Colonic mucosa (tissue), 4 donors: ENCODE measurements at regions of chr10 and their contacts with region 1.

Region 1: GRCh38 chr10:43689955-43690771 is 41.5 kb upstream of the ZNF32 start:
- DNase-seq: peak; percentile 87
- H3K4me3 ChIP-seq: peak overlapping the region; percentile 35
- H3K27ac ChIP-seq: peak overlapping the region; percentile 5
- H3K4me1 ChIP-seq: no peaks in the 10 kb centered on the region
- H3K27me3 ChIP-seq: no peaks in the 10 kb centered on the region
- CTCF ChIP-seq: peak; percentile 86

Region 2: DNA sequence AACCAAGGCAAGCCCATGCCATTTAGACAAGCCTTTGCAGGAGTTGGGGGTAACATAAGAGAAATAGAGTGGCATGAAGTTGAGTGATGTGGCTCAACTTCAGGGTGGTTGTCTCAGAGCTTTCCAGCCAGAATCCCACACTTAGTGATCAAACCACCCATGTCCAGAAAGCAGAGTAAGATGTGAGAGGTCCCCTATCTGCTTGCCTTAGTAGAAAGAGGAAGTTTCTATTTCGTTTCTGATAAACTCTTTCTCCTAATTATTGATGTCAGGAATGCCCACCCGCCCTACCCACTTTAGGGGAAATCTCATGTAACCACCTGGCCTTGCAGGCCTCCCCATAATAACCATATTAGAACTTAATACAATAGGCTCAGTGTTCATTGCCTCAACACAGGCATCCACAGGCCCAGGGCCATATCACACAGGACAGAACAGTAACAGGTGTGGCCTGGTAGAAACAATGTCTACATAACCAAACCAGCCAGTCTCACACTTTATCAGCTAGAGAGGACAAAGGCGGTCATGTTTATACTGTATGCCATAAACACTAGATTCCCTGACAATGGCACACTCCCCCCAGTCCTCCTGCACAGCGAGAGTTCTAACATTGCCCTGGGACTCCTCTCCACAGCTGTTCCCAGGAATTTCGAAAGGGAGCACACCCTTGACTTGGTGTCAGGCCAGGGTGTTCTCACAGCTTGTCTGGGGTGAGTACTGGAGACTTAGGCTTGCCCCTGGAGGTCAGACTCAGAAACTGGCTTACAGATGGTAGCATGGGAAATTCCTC is 330.4 kb after region 1 on chr10:
- intact Hi-C with region 1: loop called (anchors 10 kb)
- DNase-seq: peak; percentile 29
- H3K4me3 ChIP-seq: no peak overlapping the region
- H3K27ac ChIP-seq: no peak overlapping the region
- H3K4me1 ChIP-seq: no peaks in the 10 kb centered on the region
- H3K27me3 ChIP-seq: no peaks in the 10 kb centered on the region
- CTCF ChIP-seq: no peak

Region 3: DNA sequence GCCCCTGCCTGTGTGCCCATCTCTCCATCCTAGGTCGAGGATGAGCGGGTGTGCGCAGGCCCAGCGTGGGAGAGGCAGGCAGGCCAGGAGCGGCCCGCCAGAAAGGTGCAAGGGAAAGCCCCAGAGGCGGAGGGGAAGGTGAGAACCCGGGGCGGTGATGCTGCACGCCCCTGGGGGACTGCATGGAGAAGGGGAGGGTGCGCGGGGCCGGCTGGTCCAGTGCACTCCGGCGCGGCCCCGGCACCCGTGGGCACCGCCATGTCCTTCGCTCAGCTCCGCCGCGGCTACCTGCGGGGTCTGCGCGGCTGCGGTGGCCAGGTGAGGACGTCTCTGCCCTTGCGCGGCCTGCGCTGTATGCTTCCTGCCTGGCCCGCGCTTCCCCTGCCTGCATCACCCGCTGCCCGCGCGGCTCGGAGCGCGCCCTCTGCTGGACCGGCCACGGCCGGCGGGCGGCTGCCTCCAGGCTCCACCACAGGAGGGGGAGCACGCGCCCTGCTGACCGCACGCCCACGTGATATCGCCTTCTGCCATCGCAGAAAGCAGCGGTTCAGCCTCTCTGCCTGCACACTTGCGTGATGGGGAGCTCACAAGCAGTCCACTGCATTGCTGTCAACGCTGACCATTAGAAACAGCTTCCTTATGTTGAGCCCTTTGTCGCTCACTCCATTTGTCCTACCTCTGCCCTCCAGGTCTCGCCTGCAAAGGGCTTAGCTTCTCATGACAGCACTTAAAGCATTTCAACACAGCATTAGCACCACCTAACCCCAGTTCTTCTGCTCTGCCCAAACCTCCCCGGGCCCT is 620.8 kb after region 1 on chr10:
- intact Hi-C with region 1: loop called (anchors 5 kb)
- DNase-seq: peak; percentile 79
- H3K4me3 ChIP-seq: peak overlapping the region; percentile 16
- H3K27ac ChIP-seq: no peak overlapping the region
- H3K4me1 ChIP-seq: peaks cover 6% of the 10 kb centered on the region
- H3K27me3 ChIP-seq: no peaks in the 10 kb centered on the region
- CTCF ChIP-seq: peak; percentile 81